CD4-positive, alpha-beta T cell (primary cell): ENCODE measurements at regions of chr19 and their contacts with region 1.

Region 1: DNA sequence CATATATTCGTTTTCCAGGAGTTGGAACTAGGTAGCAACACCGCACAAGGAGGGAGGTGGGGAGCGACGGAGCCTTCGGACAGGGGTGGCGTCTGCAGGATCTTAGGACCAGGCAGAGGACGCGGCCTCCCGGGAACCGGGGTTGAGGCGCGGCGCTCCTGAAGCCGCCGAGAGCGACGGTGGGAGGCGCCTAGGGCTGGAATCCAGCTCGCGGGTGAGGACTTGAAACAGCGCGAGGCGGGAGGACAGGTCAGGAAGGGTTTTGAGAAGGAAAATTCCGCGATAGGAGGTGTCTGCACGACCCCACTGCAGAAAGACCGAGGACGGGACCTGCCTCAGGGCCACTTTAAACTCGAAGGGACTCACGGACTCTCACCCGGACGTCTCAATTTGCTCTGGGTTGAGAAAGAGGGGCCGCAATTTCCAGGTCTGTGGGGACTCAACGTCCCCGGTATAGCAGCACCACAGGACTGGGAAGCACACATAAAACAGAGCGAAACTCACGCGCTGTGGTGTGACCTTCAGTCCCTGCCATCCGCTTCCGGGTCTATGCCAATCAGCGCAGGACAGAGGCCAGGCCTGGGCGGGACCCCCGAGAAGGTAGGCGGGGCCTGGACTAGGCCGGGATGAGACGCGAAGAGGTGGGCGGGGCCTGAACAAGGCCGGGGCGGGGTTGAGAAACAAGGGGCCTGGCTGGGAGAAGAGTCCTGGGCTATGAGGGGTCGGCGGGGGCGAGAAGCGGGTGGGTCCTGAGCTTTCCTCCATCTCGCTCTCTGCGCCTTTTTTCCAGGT is at the start of gene ZNF320:
- DNase-seq: peak; percentile 77 to 95 (median 86)
- ATAC-seq: peak; percentile 100
- H3K4me3 ChIP-seq: peak within 1 kb of the TSS; percentile 73
- H3K4me3 Mint-ChIP-seq: peak within 1 kb of the TSS; percentile 93
- H3K27ac ChIP-seq: peak within 1 kb of the TSS; percentile 14 to 77
- H3K27ac Mint-ChIP-seq: peak within 1 kb of the TSS; percentile 87
- H3K4me1 ChIP-seq: peaks cover 16% of the 10 kb centered on the region
- H3K4me1 Mint-ChIP-seq: peaks cover 36% of the 10 kb centered on the region
- H3K27me3 ChIP-seq: no peaks in the 10 kb centered on the region
- H3K27me3 Mint-ChIP-seq: no peaks in the 10 kb centered on the region
- CTCF ChIP-seq: no peak
- total RNA-seq, gene ZNF320: 7.2 to 7.4 TPM

Region 2: DNA sequence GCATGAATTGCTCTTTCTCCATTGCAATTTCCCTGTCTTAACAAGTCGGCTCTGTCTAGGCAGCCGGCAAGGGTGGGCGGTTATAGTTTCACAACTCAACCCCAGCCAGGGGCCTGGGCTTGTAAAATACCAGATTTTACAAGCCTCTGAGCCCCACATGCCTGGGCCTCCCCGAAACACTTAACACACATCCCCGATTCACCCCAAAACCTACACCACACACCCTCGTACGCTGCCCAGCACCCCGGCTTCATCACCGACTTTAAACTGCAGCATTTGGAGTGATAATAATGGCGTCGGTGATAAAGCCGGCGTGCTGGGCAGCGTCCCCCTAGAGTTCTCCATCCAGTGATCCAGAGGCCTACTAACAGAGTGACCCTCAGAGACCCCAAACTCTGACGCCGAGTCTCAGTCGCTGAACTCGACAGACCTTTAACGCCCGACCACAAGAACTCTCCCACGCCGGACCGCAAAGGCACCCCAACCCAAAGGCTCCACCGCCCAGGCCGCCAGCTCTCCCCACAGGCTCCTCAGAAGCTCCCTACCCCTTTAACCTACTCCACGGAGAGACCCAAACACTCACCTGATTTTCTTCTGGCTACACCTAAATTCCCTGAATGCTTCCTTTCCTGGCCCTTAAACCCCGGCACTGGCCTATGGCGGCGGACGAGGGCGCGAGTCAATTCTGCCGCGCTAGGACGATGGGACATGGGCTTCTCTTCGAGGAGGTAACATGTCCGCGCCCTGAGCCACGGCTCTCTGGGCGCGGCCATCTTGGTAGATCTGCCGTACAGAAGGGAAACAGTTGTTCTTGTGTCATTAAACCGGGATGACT is 992.8 kb before region 1 on chr19 and contains the start of gene ZNF649:
- CTCF ChIA-PET with region 1: no interaction called
- POLR2A ChIA-PET with region 1: no interaction called
- intact Hi-C with region 1: loop called in 1 of 2 experiments (anchors 5 kb)
- DNase-seq: peak; percentile 69 to 90 (median 74)
- ATAC-seq: peak; percentile 91
- H3K4me3 ChIP-seq: peak within 1 kb of the TSS; percentile 92
- H3K4me3 Mint-ChIP-seq: peak within 1 kb of the TSS; percentile 100
- H3K27ac ChIP-seq: peak within 1 kb of the TSS; percentile 53 to 58
- H3K27ac Mint-ChIP-seq: peak within 1 kb of the TSS; percentile 89
- H3K4me1 ChIP-seq: peaks cover 14% of the 10 kb centered on the region
- H3K4me1 Mint-ChIP-seq: peaks cover 29% of the 10 kb centered on the region
- H3K27me3 ChIP-seq: peaks cover 6 to 9% of the 10 kb centered on the region in 2 experiments
- H3K27me3 Mint-ChIP-seq: peaks cover 36% of the 10 kb centered on the region
- CTCF ChIP-seq: no peak
- total RNA-seq, gene ZNF649: 13.0 to 13.2 TPM

Region 3: DNA sequence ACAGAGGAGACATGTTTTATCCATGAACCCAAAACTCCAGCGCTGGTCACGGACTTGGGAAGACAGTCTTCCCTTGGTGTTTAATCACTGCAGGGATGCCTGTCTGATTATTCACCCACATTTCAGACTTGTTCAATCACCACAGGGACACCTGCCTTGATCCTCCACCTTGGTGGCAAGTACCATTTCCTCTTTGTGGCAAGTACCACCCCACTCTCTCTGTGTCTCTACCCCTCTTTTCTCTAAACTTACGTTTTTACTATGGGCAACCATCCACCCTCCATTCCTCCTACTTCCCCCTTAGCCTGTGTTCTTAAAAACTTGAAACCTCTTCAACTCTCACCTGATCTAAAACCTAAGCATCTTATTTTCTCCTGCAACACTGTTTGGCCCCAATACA is 276.0 kb before region 1 on chr19:
- CTCF ChIA-PET with region 1: no interaction called
- POLR2A ChIA-PET with region 1: no interaction called
- intact Hi-C with region 1: no loop called
- DNase-seq: no peak
- ATAC-seq: no peak
- H3K4me3 ChIP-seq: no peak overlapping the region
- H3K4me3 Mint-ChIP-seq: no peak overlapping the region
- H3K27ac ChIP-seq: no peak overlapping the region
- H3K27ac Mint-ChIP-seq: no peak overlapping the region
- H3K4me1 ChIP-seq: no peaks in the 10 kb centered on the region
- H3K4me1 Mint-ChIP-seq: peaks cover 23% of the 10 kb centered on the region
- H3K27me3 ChIP-seq: no peaks in the 10 kb centered on the region
- H3K27me3 Mint-ChIP-seq: no peaks in the 10 kb centered on the region
- CTCF ChIP-seq: no peak

Region 4: GRCh38 chr19:52823676-52824075 is 73.7 kb before region 1 on chr19:
- CTCF ChIA-PET with region 1: no interaction called
- POLR2A ChIA-PET with region 1: no interaction called
- intact Hi-C with region 1: loop called in 1 of 2 experiments (anchors 2 kb)
- DNase-seq: no peak
- ATAC-seq: no peak
- H3K4me3 ChIP-seq: no peak overlapping the region
- H3K4me3 Mint-ChIP-seq: no peak overlapping the region
- H3K27ac ChIP-seq: no peak overlapping the region
- H3K27ac Mint-ChIP-seq: no peak overlapping the region
- H3K4me1 ChIP-seq: peaks cover 9% of the 10 kb centered on the region
- H3K4me1 Mint-ChIP-seq: peaks cover 13% of the 10 kb centered on the region
- H3K27me3 ChIP-seq: no peaks in the 10 kb centered on the region
- H3K27me3 Mint-ChIP-seq: no peaks in the 10 kb centered on the region
- CTCF ChIP-seq: no peak

Region 5: DNA sequence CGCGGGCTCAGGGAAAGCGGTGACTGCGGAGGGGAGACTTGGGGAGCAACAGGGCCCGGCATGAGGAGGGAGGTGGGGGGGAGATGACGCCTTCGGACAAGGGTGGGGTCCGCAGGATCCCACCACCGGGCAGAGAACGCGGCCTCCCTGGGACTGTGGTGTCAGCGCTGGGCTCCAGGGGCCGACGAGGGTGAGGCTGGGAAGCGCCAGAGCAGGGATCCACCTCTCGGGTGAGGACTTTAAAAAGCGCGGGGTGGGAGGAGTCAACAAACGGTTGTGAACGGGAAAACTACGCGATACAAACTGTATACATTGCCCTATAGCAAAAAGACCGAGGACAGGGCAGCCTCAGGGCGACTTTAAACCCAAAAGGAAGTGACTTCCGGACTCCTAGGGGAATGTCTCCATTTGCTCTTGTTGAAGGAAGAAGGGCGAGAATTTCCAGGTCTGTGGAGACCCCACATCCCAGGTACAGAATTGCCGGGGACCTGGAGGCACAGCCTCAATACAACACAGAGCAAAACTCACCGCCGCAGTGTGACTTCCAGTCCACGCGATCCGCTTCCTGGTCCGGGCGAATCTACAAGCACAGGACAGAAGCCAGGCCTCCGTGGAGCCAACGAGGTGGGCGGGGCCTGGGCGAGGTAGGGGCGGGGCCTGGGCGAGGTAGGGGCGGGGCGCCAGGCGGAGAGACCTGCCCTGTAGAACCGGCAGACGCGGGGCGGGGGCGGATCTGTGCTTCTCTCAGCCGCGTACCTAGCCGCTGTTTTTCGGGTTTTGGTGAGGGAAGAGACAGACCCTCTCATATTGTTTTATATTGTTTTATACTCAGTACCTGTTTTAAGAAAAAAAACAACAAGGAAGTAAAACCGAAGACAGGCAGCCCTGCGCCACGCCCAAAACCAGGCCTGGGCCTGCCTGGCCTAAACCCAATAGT is 25.8 kb after region 1 on chr19 and contains the start of gene ZNF888:
- CTCF ChIA-PET with region 1: no interaction called
- POLR2A ChIA-PET with region 1: interaction called, 4 read pairs
- intact Hi-C with region 1: loop called in 1 of 2 experiments (anchors 2 kb)
- DNase-seq: peak; percentile 71 to 92 (median 78)
- ATAC-seq: peak; percentile 99
- H3K4me3 ChIP-seq: peak within 1 kb of the TSS; percentile 68
- H3K4me3 Mint-ChIP-seq: peak within 1 kb of the TSS; percentile 96
- H3K27ac ChIP-seq: peak within 1 kb of the TSS in 1 of 2 donors; percentile 38
- H3K27ac Mint-ChIP-seq: peak within 1 kb of the TSS; percentile 89
- H3K4me1 ChIP-seq: peaks cover 22% of the 10 kb centered on the region
- H3K4me1 Mint-ChIP-seq: peaks cover 34% of the 10 kb centered on the region
- H3K27me3 ChIP-seq: peaks cover 0 to 2% of the 10 kb centered on the region in 2 experiments
- H3K27me3 Mint-ChIP-seq: no peaks in the 10 kb centered on the region
- CTCF ChIP-seq: no peak
- total RNA-seq, gene ZNF888: 2.5 to 3.0 TPM

Region 6: GRCh38 chr19:52942386-52943133 is 45.2 kb after region 1 on chr19:
- CTCF ChIA-PET with region 1: no interaction called
- POLR2A ChIA-PET with region 1: no interaction called
- intact Hi-C with region 1: loop called in 1 of 2 experiments (anchors 2 kb)
- DNase-seq: peak; percentile 89 to 97 (median 94)
- ATAC-seq: peak; percentile 99
- H3K4me3 ChIP-seq: peak overlapping the region; percentile 92
- H3K4me3 Mint-ChIP-seq: peak overlapping the region; percentile 97
- H3K27ac ChIP-seq: peak overlapping the region; percentile 35 to 78
- H3K27ac Mint-ChIP-seq: peak overlapping the region; percentile 91
- H3K4me1 ChIP-seq: peaks cover 24% of the 10 kb centered on the region
- H3K4me1 Mint-ChIP-seq: peaks cover 29% of the 10 kb centered on the region
- H3K27me3 ChIP-seq: no peaks in the 10 kb centered on the region
- H3K27me3 Mint-ChIP-seq: no peaks in the 10 kb centered on the region
- CTCF ChIP-seq: no peak

Region 7: DNA sequence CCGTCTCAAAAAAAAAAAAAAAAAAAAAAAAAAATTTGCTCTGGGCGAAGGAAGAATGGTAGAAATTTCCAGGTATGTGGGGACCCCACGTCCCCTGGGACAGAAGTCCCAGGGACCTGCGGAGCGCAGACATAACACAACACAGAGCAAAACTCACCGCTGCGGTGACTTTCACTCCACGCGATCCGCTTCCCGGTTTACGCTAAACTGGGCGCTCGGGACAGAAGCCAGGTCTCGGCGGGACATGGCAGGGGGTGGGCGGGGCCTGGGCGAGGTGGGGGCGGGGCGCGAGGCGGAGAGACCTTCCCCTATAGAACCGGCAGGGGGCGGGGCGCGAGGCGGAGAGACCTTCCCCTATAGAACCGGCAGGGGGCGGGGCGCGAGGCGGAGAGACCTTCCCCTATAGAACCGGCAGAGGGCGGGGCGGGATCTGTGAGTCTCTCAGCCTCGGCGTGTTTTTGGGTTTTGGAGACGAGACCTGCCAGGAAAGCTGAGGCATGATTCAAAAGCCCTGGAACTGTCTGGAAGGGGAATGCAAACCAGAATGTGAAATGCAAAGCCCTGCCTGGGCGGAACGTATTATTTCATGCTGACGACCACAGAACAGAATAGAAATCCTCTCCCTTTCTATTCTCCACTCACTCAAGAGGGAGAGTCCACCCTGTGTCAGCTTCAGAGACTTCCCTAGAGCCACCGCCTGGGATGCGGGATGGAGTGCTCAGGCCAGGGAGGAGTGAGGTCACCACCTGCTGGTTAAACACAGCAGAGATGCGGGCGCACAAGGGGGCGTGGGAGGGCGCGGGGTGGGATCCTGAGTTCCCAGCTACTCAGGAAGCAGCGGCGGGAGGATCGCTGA is 96.2 kb after region 1 on chr19:
- CTCF ChIA-PET with region 1: no interaction called
- POLR2A ChIA-PET with region 1: no interaction called
- intact Hi-C with region 1: loop called in 1 of 2 experiments (anchors 5 kb)
- DNase-seq: peak; percentile 66 to 84 (median 74)
- ATAC-seq: peak; percentile 81
- H3K4me3 ChIP-seq: peak overlapping the region; percentile 52
- H3K4me3 Mint-ChIP-seq: peak overlapping the region; percentile 93
- H3K27ac ChIP-seq: no peak overlapping the region
- H3K27ac Mint-ChIP-seq: no peak overlapping the region
- H3K4me1 ChIP-seq: peaks cover 18% of the 10 kb centered on the region
- H3K4me1 Mint-ChIP-seq: peaks cover 20% of the 10 kb centered on the region
- H3K27me3 ChIP-seq: peaks cover 0 to 5% of the 10 kb centered on the region in 2 experiments
- H3K27me3 Mint-ChIP-seq: peaks cover 7% of the 10 kb centered on the region
- CTCF ChIP-seq: peak; percentile 67